Aorta (tissue), 5 donors: ENCODE measurements at regions of chr12 and their contacts with region 1.

Region 1: DNA sequence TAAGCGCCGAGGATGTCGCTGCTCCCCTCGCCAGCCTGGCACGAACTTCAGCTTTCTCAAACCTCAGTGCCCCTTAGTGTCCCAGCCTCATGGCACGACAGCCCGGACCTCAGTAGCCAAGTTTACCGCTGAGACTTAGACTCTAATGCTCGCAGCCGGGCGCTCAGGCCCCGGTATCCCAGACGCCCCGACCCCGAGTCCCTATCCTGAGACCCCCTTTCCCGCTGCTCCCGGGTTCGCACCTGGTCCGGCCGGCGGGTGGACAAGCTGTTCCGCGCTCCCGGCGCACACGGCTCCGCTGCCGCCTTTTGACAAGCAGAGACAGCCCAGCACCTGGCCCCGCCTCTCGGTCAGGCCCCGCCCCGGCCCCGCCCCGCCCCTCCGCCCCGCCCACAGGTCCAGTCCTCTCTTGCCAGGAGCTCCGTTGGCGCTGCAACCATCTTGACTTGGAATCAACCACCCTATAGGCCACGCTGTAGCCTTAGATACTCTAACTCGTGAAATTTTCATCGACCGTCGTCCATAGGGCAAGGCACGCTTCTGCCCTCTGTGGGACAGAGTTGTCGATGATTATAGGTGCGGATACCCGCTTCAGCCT is at the start of gene VDR:
- DNase-seq: peak; percentile 84 to 90
- ATAC-seq: peak; percentile 91
- H3K4me3 ChIP-seq: peak within 1 kb of the TSS; percentile 32 to 59
- H3K27ac ChIP-seq: peak within 1 kb of the TSS in 1 of 2 donors; percentile 26
- H3K4me1 ChIP-seq: peaks cover 0 to 7% of the 10 kb centered on the region in 2 donors
- H3K27me3 ChIP-seq: no peaks in the 10 kb centered on the region
- total RNA-seq, gene VDR: 7.9 to 9.3 TPM

Region 2: DNA sequence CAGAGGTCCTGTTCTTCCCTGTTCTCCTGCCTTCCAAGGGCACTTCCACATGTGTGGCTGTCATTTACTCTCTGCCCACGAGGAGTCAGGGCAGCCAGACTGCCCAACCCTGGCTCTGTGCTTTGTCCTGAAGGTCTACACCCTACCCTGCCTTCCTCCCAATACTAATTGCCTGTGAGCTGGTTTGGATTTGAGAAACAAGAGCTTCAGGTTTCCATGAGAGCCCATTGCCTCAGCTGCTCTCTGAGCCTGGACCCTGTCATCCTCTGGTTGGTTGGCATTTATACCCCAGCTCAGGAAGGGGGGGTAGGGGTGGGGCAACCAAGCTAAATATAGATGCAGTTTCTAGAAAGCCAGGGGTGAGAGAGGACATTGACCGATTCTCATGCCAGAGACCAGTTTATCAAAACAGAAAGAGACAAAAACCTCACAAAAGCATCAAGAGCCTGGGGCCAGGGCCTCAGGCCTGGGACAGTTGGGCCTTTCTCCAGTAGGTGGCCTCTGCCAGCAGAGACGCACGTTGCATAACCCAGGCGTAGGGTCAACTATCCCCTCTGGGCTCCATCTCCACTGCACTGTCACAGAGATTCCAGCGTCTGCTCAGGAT is 34.5 kb before region 1 on chr12:
- intact Hi-C with region 1: loop called in 1 of 2 experiments (anchors 1 kb)
- DNase-seq: peak; percentile 68 to 82
- ATAC-seq: peak; percentile 74
- H3K4me3 ChIP-seq: no peak overlapping the region
- H3K27ac ChIP-seq: no peak overlapping the region
- H3K4me1 ChIP-seq: peaks cover 0 to 1% of the 10 kb centered on the region in 2 donors
- H3K27me3 ChIP-seq: no peaks in the 10 kb centered on the region

Region 3: GRCh38 chr12:47949441-47950308 is 44.9 kb after region 1 on chr12:
- intact Hi-C with region 1: loop called in 1 of 2 experiments (anchors 5 kb)
- DNase-seq: peak; percentile 86 to 91
- ATAC-seq: peak; percentile 87
- H3K4me3 ChIP-seq: no peak overlapping the region
- H3K27ac ChIP-seq: no peak overlapping the region
- H3K4me1 ChIP-seq: no peaks in the 10 kb centered on the region
- H3K27me3 ChIP-seq: no peaks in the 10 kb centered on the region

Region 4: GRCh38 chr12:47963340-47964040 is 58.7 kb after region 1 on chr12 and contains the start of gene TMEM106C:
- intact Hi-C with region 1: loop called in 1 of 2 experiments (anchors 5 kb)
- DNase-seq: peak; percentile 93 to 98
- ATAC-seq: peak; percentile 96
- H3K4me3 ChIP-seq: peak within 1 kb of the TSS; percentile 75 to 77
- H3K27ac ChIP-seq: peak within 1 kb of the TSS in 1 of 2 donors; percentile 12
- H3K4me1 ChIP-seq: no peaks in the 10 kb centered on the region
- H3K27me3 ChIP-seq: no peaks in the 10 kb centered on the region
- total RNA-seq, gene TMEM106C: 56.3 to 70.0 TPM